Activated naive CD4-positive, alpha-beta T cell treated with anti-CD3 and anti-CD28 coated beads, Interleukin-2, amount 10 ng/mL, durations not matched to agents 7 days and 5 days (primary cell): ENCODE measurements at regions of chr9 and their contacts with region 1.

Region 1: GRCh38 chr9:98118640-98119601 is at the start of gene TRIM14:
- DNase-seq: peak; percentile 82
- H3K4me3 Mint-ChIP-seq: peak within 1 kb of the TSS; percentile 88
- H3K27ac Mint-ChIP-seq: peak within 1 kb of the TSS; percentile 99
- H3K4me1 Mint-ChIP-seq: peaks cover 60% of the 10 kb centered on the region
- H3K27me3 Mint-ChIP-seq: no peaks in the 10 kb centered on the region

Region 2: DNA sequence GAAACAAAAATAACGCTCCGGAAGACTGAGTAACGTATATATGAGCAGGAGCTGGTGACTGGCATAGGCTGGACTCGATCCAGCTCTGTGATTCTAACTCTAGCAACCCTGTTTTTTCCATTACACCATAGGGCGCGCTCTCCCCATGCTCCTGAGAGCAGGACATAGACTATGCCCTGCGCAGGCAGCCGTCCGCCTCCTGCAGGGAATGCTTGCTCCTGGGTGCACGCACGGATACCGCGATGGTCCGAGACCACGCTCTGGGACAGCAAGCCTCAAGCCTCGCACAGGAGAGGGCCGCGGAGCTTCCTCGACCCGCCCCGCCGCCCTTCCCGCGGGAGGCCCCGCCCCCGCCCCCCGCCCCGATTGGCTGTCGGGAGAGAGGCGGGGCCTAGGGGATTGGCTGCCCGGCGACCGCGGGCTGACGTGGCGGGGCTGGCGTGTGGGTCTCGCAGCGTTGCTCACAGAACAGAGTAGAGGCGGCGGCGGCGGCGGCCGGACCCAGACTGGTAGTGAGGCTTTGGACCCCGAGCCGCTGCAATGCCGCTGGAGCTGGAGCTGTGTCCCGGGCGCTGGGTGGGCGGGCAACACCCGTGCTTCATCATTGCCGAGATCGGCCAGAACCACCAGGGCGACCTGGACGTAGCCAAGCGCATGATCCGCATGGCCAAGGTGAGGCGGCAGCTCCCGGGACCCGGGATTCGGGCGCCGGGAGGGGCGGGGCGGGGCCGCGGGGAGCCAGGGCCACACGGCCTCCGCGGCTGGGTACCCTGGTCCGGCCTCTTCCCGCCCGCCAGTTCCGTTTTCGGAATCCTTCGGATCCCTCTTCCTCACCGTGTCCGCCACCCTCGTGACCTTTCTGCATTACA is 62.4 kb before region 1 on chr9 and contains the start of gene NANS:
- CTCF ChIA-PET with region 1: no interaction called
- DNase-seq: peak; percentile 95
- H3K4me3 Mint-ChIP-seq: peak within 1 kb of the TSS; percentile 96
- H3K27ac Mint-ChIP-seq: peak within 1 kb of the TSS; percentile 96
- H3K4me1 Mint-ChIP-seq: peaks cover 44% of the 10 kb centered on the region
- H3K27me3 Mint-ChIP-seq: no peaks in the 10 kb centered on the region

Region 3: GRCh38 chr9:98101868-98102273 is 17.1 kb before region 1 on chr9:
- CTCF ChIA-PET with region 1: interaction called, 24 read pairs
- DNase-seq: peak; percentile 91
- H3K4me3 Mint-ChIP-seq: peak overlapping the region; percentile 61
- H3K27ac Mint-ChIP-seq: peak overlapping the region; percentile 98
- H3K4me1 Mint-ChIP-seq: peaks cover 95% of the 10 kb centered on the region
- H3K27me3 Mint-ChIP-seq: no peaks in the 10 kb centered on the region

Region 4: DNA sequence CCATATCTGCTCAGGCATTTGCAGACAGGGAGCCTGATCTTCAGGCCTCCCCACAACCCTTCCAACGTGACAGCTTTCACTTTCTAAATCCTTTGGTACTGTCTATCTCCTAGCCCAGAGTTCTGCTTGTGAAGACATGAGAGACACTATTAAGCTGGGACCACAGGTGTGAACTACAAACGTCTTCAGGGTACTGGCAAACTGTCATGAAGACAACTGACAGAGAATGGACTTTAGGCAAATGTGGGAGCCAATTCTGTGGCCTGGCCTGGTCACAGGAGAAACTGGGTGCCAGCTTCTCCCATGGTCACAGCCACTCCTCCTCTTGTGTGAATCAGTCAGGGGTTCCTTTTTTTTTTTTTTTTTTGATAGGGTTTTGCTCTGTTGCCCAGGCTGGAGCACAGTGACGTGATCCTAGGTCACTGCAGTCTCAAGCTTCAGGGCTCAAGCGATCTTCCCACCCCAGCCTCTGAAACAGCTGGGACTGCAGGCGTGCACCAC is 10.3 kb before region 1 on chr9:
- CTCF ChIA-PET with region 1: interaction called, 10 read pairs
- DNase-seq: peak; percentile 63
- H3K4me3 Mint-ChIP-seq: peak overlapping the region; percentile 48
- H3K27ac Mint-ChIP-seq: peak overlapping the region; percentile 99
- H3K4me1 Mint-ChIP-seq: peaks cover 96% of the 10 kb centered on the region
- H3K27me3 Mint-ChIP-seq: no peaks in the 10 kb centered on the region

Region 5: GRCh38 chr9:98255578-98256296 is 136.8 kb after region 1 on chr9 and contains the start of gene TBC1D2:
- CTCF ChIA-PET with region 1: interaction called, 13 read pairs
- DNase-seq: peak; percentile 98
- H3K4me3 Mint-ChIP-seq: peak within 1 kb of the TSS; percentile 95
- H3K27ac Mint-ChIP-seq: peak within 1 kb of the TSS; percentile 99
- H3K4me1 Mint-ChIP-seq: peaks cover 36% of the 10 kb centered on the region
- H3K27me3 Mint-ChIP-seq: peaks cover 4% of the 10 kb centered on the region